Heart left ventricle (tissue), 16 donors: ENCODE measurements at regions of chr6 and their contacts with region 1.

Region 1: DNA sequence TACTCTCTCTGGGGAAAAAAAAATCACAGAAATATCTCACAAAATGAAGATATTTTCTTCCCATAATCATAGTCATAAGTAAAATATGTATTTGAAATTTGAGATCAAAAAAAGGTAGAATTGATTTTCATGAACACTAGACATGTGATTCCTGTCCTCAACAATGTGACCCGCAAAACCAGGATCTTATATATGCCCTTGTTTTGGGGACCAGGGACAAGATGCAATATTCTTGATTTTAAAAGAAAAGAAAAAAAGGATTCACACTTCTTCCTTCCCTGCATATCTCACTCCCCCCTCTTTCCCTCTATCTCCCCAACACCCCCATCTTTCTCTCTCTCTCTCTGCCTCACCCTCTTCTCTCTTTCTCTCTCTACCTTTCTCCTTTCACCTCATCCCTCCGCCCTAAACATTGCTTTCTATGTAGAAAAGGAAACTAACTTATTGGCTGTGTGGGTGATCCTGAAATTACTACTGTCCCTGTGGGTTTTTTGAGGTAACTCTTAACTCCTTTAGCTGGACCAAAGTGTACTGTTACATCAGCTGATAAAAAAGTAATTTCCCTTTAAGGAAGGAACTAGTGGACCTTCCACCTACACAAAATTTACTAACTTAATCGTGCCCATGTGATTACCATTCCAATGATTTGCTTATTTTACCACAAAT is 85.6 kb downstream of the AIG1 start:
- DNase-seq: no peak
- ATAC-seq: no peak
- H3K4me3 ChIP-seq: no peak overlapping the region
- H3K27ac ChIP-seq: no peak overlapping the region
- H3K4me1 ChIP-seq: peaks cover 0 to 5% (median 0%) of the 10 kb centered on the region in 12 donors
- H3K27me3 ChIP-seq: no peaks in the 10 kb centered on the region
- CTCF ChIP-seq: no peak
- POLR2A ChIP-seq: no peak

Region 2: DNA sequence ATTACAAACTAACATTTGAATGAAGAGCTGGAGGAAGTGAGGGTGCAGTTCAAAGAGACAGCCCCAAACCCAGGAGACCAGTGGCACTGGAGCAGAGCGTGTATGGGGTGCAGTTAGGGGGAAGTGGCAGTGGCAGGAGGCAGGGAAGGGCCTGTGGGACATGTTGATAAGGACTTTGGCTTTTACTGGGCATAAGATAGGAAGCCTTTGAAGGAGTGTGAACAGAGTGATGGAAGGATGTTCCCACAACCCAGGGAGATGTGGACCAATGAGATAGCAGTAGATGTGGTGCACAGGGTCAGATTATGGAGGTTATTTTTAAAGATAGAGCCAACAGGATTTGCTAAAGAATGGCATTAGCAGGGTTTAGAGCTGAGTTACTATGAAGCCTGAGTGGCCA is 29.2 kb before region 1 on chr6:
- intact Hi-C with region 1: loop called in 1 of 10 experiments (anchors 2 kb)
- DNase-seq: no peak
- ATAC-seq: no peak
- H3K4me3 ChIP-seq: no peak overlapping the region
- H3K27ac ChIP-seq: no peak overlapping the region
- H3K4me1 ChIP-seq: peaks cover 0 to 4% (median 0%) of the 10 kb centered on the region in 12 donors
- H3K27me3 ChIP-seq: no peaks in the 10 kb centered on the region
- CTCF ChIP-seq: no peak
- POLR2A ChIP-seq: no peak

Region 3: GRCh38 chr6:143286251-143286795 is 140.0 kb after region 1 on chr6:
- intact Hi-C with region 1: loop called in 1 of 10 experiments (anchors 10 kb)
- DNase-seq: no peak
- ATAC-seq: peak in 2 of 4 donors; percentile 20 to 44
- H3K4me3 ChIP-seq: no peak overlapping the region
- H3K27ac ChIP-seq: peak overlapping the region in 4 of 12 donors; percentile 10 to 39 (median 20)
- H3K4me1 ChIP-seq: peaks cover 0 to 11% (median 4%) of the 10 kb centered on the region in 12 donors
- H3K27me3 ChIP-seq: no peaks in the 10 kb centered on the region
- CTCF ChIP-seq: no peak
- POLR2A ChIP-seq: no peak